Psoas muscle (tissue), 8 donors: ENCODE measurements at regions of chr3 and their contacts with region 1.

Region 1: DNA sequence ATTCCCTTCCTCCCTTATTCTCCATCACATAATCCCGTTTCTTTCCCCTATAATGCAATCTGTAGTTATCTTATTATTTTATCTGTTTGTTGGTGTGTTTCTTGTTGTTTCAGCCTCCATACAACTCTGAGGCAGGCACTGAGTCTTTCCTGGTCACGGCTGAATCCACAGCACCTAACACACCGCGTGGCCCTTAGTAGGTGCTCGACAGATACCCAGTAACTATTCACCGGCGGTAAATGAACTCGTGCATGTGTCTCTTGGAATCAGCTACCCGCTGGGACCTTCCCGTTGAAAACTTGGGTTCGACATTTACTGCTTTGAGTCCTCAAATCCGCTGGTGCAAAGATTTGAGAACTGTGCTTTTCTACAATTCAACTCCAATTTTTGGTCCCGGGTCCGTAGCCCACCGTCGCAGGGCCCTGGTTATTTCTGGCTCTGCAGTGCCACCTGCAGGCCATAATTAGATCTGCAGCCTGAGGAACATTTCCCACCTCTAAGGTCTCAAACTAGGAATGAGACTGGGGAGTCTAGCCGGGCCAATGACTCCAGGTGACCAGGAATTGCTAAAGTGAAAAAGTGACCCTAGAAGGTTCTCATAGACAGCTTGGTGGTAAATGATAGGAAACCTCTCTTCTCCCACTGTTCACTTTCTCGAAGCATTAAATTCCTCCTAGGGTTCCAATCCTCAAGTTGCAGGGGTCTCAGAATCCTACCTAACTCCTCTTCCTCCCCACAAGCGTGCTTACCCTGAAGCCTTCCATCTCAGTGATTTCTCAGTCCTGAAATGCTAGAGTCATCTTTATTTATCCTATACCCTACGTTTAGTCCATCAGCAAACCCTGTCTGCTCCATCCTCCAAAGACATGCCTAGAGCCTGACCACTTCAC is 40.0 kb upstream of the TRH start:
- DNase-seq: no peak
- ATAC-seq: peak; percentile 59 to 78 (median 66)
- H3K4me3 ChIP-seq: peak overlapping the region; percentile 51
- H3K27ac ChIP-seq: no peak overlapping the region
- H3K4me1 ChIP-seq: peaks cover 11% of the 10 kb centered on the region
- H3K27me3 ChIP-seq: peaks cover 0 to 3% (median 0%) of the 10 kb centered on the region in 3 donors
- CTCF ChIP-seq: peak; percentile 95

Region 2: GRCh38 chr3:129383292-129383860 is 551.1 kb before region 1 on chr3:
- intact Hi-C with region 1: loop called in 1 of 2 experiments (anchors 10 kb)
- DNase-seq: peak; percentile 38 to 70
- ATAC-seq: peak; percentile 83 to 92 (median 90)
- H3K4me3 ChIP-seq: no peak overlapping the region
- H3K27ac ChIP-seq: no peak overlapping the region
- H3K4me1 ChIP-seq: peaks cover 6% of the 10 kb centered on the region
- H3K27me3 ChIP-seq: no peaks in the 10 kb centered on the region
- CTCF ChIP-seq: peak; percentile 70

Region 3: GRCh38 chr3:129490242-129491045 is 444.0 kb before region 1 on chr3:
- intact Hi-C with region 1: loop called in 1 of 2 experiments (anchors 2 kb)
- DNase-seq: peak; percentile 81 to 88
- ATAC-seq: peak; percentile 87
- H3K4me3 ChIP-seq: no peak overlapping the region
- H3K27ac ChIP-seq: peak overlapping the region; percentile 72
- H3K4me1 ChIP-seq: peaks cover 37% of the 10 kb centered on the region
- H3K27me3 ChIP-seq: no peaks in the 10 kb centered on the region
- CTCF ChIP-seq: peak; percentile 88

Region 4: GRCh38 chr3:129627429-129628168 is 306.9 kb before region 1 on chr3:
- intact Hi-C with region 1: loop called (anchors 1 to 5 kb)
- DNase-seq: peak; percentile 65 to 84
- ATAC-seq: peak; percentile 50 to 70 (median 61)
- H3K4me3 ChIP-seq: peak overlapping the region; percentile 76
- H3K27ac ChIP-seq: peak overlapping the region; percentile 91
- H3K4me1 ChIP-seq: peaks cover 23% of the 10 kb centered on the region
- H3K27me3 ChIP-seq: no peaks in the 10 kb centered on the region
- CTCF ChIP-seq: peak; percentile 87

Region 5: GRCh38 chr3:129650256-129650872 is 284.1 kb before region 1 on chr3:
- intact Hi-C with region 1: loop called in 1 of 2 experiments (anchors 5 kb)
- DNase-seq: peak; percentile 66 to 72
- ATAC-seq: peak; percentile 53 to 81 (median 71)
- H3K4me3 ChIP-seq: no peak overlapping the region
- H3K27ac ChIP-seq: no peak overlapping the region
- H3K4me1 ChIP-seq: peaks cover 44% of the 10 kb centered on the region
- H3K27me3 ChIP-seq: no peaks in the 10 kb centered on the region
- CTCF ChIP-seq: peak; percentile 64

Region 6: DNA sequence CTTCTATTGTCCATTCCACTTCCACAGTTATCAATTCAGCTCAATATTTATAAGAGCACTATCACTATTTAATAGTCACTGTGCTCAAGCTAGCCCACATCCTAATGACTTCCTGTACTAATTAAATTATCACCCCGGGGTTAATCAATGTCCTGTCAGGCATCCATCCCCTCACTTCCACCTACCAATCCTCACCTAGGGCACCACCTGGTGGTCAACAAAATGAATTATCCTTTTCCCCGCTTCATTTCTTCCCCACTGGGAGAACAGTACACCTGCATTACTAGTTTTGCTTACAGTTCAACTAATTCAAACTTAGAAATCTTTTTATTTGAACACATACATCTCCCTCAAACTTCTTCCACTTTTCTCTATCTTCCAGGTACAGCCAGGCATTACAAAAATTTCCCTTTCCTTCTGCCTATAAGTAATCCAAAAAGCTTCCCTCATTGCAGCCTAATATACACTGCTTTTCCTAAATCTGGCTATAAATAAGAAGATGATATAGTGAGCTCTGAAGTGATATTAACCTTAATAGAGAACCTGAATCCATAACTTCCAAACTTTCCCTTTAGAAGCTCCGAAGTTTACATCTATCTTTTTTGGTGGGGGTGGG is 109.4 kb before region 1 on chr3:
- intact Hi-C with region 1: loop called (anchors 5 kb)
- DNase-seq: no peak
- ATAC-seq: peak in 3 of 4 donors; percentile 56 to 72 (median 70)
- H3K4me3 ChIP-seq: no peak overlapping the region
- H3K27ac ChIP-seq: no peak overlapping the region
- H3K4me1 ChIP-seq: peaks cover 34% of the 10 kb centered on the region
- H3K27me3 ChIP-seq: no peaks in the 10 kb centered on the region
- CTCF ChIP-seq: peak; percentile 72

Region 7: GRCh38 chr3:130266817-130267216 is 332.3 kb after region 1 on chr3:
- intact Hi-C with region 1: no loop called
- DNase-seq: no peak
- ATAC-seq: no peak
- H3K4me3 ChIP-seq: no peak overlapping the region
- H3K27ac ChIP-seq: no peak overlapping the region
- H3K4me1 ChIP-seq: no peaks in the 10 kb centered on the region
- H3K27me3 ChIP-seq: peaks cover 0 to 4% (median 0%) of the 10 kb centered on the region in 3 donors
- CTCF ChIP-seq: no peak